Activated CD4-positive, alpha-beta T cell treated with anti-CD3 and anti-CD28 coated beads for 36 hours (primary cell): ENCODE measurements at regions of chr5 and their contacts with region 1.

Region 1: DNA sequence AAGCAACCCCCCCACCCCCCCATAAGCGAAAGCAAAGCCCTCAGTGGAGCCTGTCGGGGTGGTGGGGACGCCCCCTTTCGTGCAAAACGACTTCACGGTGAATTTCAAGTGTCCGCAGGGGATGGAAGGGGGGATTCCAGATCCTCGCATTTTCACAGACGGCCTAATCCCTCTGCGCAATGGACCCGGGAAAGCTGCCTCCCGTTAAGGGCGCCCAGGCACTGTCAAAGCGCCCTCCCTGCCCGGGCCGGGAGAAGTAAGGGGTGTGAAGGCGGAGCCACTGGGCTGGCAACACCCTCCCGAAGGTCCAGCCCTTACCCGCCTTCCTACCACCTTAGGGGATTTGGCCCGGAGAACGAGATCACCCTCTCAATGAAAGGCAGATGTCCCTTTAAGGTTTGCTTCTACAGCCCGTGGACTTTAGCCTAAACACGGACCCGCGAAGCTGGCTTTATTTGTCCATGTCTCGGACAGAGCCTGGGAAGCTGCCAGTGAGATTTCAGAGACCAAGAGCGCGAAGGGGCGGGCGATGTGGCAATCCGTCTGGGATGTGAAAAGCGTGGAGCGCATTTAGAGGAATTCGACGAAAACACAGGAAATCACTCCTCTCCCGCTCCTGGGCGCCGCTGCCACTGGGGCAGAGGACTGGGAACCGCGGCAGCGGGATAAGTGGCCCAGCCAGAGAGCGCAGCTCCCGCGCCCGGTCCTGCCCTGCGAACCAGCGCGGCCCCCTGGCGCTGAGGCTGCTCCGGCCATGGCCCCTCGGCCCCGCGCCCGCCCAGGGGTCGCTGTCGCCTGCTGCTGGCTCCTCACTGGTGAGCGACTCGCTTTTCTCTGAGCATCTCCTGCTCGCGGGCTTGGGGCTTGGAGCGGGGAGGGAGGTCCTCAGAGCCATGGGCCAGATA is at the starts of genes ITGA1 and PELO:
- DNase-seq: peak; percentile 70
- ATAC-seq: peak; percentile 78
- H3K4me3 Mint-ChIP-seq: peak within 1 kb of the TSS; percentile 78
- H3K27ac Mint-ChIP-seq: peak within 1 kb of the TSS; percentile 52
- H3K4me1 Mint-ChIP-seq: peaks cover 22% of the 10 kb centered on the region
- H3K27me3 Mint-ChIP-seq: peaks cover 16% of the 10 kb centered on the region
- total RNA-seq, gene ITGA1: 1.9 to 3.9 TPM
- total RNA-seq, gene PELO: 12.8 to 17.3 TPM

Region 2: DNA sequence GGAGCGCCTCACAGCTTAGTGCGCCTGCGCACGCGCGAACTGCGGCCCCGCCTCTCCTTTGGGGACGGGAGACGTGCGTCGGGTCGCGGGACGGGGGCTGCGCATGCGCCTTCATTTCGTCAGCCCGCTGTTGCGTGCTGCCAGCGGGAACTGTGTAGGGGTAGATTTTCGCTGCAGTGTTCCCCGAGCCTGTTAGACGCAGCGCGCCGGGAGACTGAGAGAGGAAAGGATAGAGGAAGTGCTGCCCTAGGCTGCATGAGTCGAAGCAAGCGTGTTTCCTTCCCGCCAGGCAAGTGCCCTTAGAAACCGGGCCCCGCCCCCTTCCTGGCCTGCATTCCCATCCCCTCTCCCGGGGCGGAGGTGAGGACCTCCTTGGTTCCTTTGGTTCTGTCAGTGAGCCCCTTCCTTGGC is 12.1 kb after region 1 on chr5:
- CTCF ChIA-PET with region 1: interaction called, 13 read pairs
- POLR2A ChIA-PET with region 1: interaction called, 5 read pairs
- intact Hi-C with region 1: loop called in 1 of 2 experiments (anchors 1 kb)
- DNase-seq: peak; percentile 98
- ATAC-seq: peak; percentile 91
- H3K4me3 Mint-ChIP-seq: peak overlapping the region; percentile 91
- H3K27ac Mint-ChIP-seq: peak overlapping the region; percentile 97
- H3K4me1 Mint-ChIP-seq: peaks cover 47% of the 10 kb centered on the region
- H3K27me3 Mint-ChIP-seq: no peaks in the 10 kb centered on the region

Region 3: GRCh38 chr5:53095931-53096525 is 308.2 kb after region 1 on chr5:
- CTCF ChIA-PET with region 1: interaction called, 3 read pairs
- POLR2A ChIA-PET with region 1: no interaction called
- intact Hi-C with region 1: loop called in 1 of 2 experiments (anchors 5 kb)
- DNase-seq: peak; percentile 83
- ATAC-seq: peak; percentile 66
- H3K4me3 Mint-ChIP-seq: no peak overlapping the region
- H3K27ac Mint-ChIP-seq: no peak overlapping the region
- H3K4me1 Mint-ChIP-seq: peaks cover 6% of the 10 kb centered on the region
- H3K27me3 Mint-ChIP-seq: no peaks in the 10 kb centered on the region